Right ventricle myocardium inferior (tissue), 1 donor: ENCODE measurements at regions of chr3 and their contacts with region 1.

Region 1: DNA sequence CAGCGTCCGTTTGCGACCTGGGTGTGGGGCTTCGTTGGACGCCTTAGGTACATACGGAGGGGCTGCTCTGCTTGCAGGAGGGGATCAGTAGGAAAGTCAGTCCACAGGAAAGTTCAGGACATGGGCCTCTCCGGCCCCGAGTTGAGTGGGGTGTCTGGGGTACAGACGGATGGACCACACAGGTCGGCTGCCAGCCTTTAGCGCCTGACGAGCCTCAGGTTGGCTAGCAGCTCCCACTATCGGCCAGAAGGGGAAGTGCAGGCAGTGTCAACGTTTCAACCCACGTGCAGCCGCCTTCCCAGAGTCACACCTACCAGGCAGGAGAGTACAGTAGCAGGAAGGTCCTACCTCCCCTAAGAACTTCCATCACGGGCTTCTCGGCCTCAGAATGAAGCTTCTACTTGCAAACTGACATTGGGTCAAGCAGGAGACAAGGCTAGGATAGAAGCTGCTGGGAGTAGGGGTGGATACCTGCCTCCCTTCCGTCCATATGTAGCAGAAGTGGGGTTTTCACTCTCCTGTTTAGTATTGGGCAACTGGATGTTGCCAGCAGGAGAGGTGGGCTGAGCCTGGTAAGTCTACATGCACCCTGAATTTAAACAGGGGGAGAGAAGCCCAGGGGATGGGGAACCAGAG is 1.8 kb upstream of the SCN5A start:
- DNase-seq: peak; percentile 81
- ATAC-seq: peak; percentile 40

Region 2: DNA sequence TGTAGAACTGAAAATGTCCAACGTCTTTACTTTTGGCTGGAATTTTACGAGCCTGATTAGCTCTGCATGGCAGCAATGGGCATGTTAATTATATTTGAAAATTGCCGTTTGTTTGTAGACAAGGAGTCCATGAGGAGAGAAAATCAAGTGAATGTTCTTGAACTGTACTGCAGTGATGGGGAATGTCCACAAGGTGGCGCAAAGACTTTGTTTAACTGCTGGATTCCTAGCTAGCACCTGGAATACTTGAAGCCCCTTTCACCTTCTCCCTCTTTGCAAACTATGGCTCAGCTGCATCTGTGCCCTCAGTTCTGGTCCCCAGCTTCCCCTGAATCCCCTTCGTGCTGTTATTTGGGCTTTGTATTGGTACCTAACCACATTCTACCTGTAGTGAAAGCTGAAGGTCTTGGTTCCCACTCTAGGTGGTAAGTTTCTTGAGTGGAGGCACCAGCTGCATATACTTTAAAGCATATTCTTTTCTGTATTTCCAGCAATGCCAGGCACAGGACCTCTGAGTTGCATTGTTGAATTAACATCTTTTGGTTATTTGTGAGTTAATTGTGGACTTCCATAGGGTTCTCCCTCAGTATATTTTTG is 129.8 kb before region 1 on chr3:
- intact Hi-C with region 1: loop called (anchors 2 kb)
- DNase-seq: no peak
- ATAC-seq: peak; percentile 57

Region 3: DNA sequence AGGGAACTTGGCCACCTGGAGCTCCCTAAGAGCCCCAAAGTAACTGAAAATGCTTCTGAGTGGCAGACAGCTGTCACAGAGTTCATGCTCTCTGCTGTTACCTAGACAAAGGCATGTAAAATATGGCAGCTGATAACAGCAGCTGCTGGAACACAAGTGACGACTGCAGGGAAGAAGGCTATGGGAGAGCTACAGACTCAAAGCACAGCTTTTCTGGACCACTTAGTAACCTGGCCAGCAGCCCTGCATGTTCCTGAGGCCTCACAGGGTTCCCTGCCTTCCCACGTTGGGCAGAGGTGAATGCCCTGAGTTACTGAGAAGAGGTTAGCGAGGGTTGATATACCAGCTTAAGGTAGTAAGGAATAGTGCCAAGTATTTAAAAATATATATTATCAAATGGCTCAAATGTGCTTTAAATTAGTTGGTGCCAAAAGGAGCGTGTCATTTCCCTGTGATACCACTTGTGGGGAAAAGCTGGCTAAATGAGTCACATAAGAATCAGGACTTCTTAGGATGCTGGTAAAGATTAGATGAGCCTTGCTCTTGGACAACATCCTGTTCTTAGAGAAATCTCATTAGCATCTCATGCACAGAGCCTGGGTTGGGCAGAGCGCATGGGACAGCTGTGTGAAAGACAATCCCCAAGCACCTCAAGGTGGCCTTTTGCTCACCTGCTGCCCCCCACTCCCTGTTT is 74.6 kb after region 1 on chr3:
- intact Hi-C with region 1: loop called (anchors 2 kb)
- DNase-seq: no peak
- ATAC-seq: peak; percentile 88